ENCODE measurements at regions of chr11 and their contacts with region 1.

Region 1: DNA sequence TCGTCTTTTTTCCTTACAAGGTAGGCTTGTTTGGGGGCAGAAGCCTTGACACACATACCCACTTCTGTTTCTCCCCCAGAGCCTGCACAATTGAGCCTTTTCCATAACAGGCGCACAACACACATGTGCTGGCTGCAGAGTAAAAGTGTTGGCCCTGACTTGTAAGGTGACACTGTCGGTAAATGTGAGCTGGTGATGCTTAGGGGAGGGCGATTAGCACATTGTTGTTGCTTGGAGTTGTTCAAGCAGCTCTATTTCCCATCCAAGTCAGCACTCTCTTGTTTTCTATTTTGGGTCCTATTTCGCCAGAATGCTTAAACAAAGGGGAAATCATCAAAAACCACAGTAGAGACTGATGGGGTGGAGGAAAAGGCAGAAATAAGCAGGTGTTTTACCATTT is 51.9 kb upstream of the PTPRJ start:
- DNase-seq: no peak
- H3K4me3 Mint-ChIP-seq: no peak overlapping the region
- H3K27ac Mint-ChIP-seq: no peak overlapping the region
- H3K4me1 Mint-ChIP-seq: peaks cover 28% of the 10 kb centered on the region
- H3K27me3 Mint-ChIP-seq: no peaks in the 10 kb centered on the region

Region 2: DNA sequence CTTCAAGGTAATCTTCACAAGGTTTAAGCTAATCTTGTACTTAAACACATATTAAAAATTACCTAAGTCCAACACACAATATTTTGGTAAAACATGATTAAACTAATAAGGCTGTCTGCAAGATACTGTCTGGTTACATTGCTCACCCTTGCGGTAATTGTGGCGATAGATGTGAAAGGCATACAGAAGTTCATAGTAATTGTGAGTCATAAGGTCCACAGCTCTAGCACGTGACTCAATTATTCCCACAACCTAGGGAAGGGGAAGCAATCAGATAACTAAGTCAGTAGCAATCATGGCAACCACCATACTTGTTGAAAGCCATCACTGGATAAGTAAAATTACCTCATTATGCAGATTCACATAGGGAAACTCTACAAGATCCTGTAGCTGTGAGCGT is 130.8 kb before region 1 on chr11:
- CTCF ChIA-PET with region 1: interaction called, 3 read pairs
- intact Hi-C with region 1: loop called (anchors 2 kb)
- DNase-seq: peak; percentile 80
- H3K4me3 Mint-ChIP-seq: no peak overlapping the region
- H3K27ac Mint-ChIP-seq: peak overlapping the region; percentile 84
- H3K4me1 Mint-ChIP-seq: peaks cover 12% of the 10 kb centered on the region
- H3K27me3 Mint-ChIP-seq: no peaks in the 10 kb centered on the region

Region 3: DNA sequence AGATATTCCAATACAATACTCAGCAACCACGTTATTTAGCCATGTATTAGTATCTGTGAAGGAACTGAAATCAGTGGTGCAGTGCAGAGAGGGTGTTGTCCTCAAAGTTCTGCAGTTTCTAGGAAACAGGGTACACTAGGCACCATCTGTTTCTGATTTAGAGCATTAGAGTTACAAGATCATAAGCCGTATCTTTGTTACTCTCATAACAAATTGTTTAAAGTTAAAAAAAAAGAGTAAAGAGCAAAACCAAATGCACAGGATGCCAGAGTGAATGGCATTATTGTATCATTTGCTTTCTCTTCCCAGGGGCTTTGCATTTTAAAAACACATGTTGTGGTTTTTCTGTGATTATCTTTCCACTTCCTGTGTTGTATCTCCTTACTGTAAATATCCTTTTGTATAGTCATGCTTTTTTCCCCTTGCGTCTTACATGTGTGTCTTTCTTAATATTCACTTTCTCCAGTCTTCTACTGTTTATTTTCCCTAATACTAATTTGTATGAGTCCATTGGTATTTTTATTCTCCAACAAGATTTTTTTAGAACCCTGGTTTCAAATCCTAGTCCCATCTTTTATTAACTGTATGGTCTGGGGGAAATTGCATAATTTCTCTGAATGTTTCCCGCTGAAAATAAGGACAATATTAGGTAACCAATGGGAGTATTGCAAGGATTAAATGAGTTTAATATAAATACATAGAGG is 65.1 kb before region 1 on chr11:
- CTCF ChIA-PET with region 1: interaction called, 4 read pairs
- intact Hi-C with region 1: loop called (anchors 2 kb)
- DNase-seq: no peak
- H3K4me3 Mint-ChIP-seq: no peak overlapping the region
- H3K27ac Mint-ChIP-seq: no peak overlapping the region
- H3K4me1 Mint-ChIP-seq: peaks cover 33% of the 10 kb centered on the region
- H3K27me3 Mint-ChIP-seq: no peaks in the 10 kb centered on the region

Region 4: GRCh38 chr11:48014917-48015316 is 86.5 kb after region 1 on chr11:
- CTCF ChIA-PET with region 1: interaction called, 10 read pairs
- intact Hi-C with region 1: no loop called
- DNase-seq: no peak
- H3K4me3 Mint-ChIP-seq: no peak overlapping the region
- H3K27ac Mint-ChIP-seq: no peak overlapping the region
- H3K4me1 Mint-ChIP-seq: peaks cover 82% of the 10 kb centered on the region
- H3K27me3 Mint-ChIP-seq: no peaks in the 10 kb centered on the region

Region 5: GRCh38 chr11:48307760-48308386 is 379.4 kb after region 1 on chr11:
- CTCF ChIA-PET with region 1: no interaction called
- intact Hi-C with region 1: loop called (anchors 5 kb)
- DNase-seq: peak; percentile 87
- H3K4me3 Mint-ChIP-seq: no peak overlapping the region
- H3K27ac Mint-ChIP-seq: no peak overlapping the region
- H3K4me1 Mint-ChIP-seq: no peaks in the 10 kb centered on the region
- H3K27me3 Mint-ChIP-seq: peaks cover 10% of the 10 kb centered on the region

Measured in activated naive CD4-positive, alpha-beta T cell treated with anti-CD3 and anti-CD28 coated beads for 36 hours (primary cell).